IMR-90 (cell line): ENCODE measurements at regions of chr11 and their contacts with region 1.

Region 1: DNA sequence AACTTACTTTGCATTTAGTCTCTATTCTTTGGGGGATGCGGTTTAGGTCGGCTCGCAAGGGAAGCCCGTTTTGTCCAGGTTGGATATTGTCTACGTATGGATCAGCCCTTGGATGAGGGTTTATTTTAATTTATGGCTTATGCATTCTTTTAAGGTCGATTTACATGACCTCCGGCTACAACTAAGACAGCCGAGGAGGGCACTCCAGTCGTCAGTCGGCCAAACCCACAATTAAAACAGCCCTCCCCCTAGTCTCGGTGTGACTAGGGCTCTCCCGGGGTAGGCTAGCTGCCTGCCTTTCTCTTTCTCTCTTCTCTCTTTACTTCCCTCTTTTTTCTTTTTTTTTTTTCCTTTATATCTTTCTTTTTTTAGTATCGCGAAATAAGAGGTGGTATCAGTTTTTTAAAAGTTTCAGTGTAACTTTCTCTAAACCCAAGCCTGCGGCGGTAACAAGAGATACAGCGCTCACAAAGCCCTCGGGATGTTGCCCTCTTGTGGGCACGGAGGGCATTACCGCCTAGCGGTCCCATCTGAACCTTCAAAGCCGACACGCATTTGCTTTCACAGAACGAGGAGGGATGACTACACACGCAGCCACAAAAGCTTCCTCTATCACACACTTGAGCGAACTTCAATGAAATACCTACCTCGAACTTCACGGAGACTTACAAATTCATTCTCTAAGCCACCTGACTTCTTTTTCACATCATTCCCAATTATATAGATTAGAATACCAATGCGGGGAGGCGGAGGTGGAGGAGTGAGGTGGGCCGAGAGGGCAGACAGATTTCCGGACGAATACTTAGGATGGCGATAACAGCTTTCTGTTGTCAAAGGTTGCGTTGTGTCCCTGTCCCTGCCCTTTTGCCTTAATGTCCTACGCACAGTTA is 132.3 kb upstream of the C11orf58 start:
- DNase-seq: peak; percentile 96
- ATAC-seq: peak; percentile 40
- H3K4me3 ChIP-seq: peak overlapping the region; percentile 67
- H3K27ac ChIP-seq: peak overlapping the region; percentile 93
- H3K4me1 ChIP-seq: peaks cover 10% of the 10 kb centered on the region
- H3K27me3 ChIP-seq: no peaks in the 10 kb centered on the region
- CTCF ChIP-seq: peak; percentile 97
- POLR2A ChIP-seq: peak; percentile 23; the same call in 1 of the 2 replicates
- RAD21 ChIP-seq: peak; percentile 93

Region 2: DNA sequence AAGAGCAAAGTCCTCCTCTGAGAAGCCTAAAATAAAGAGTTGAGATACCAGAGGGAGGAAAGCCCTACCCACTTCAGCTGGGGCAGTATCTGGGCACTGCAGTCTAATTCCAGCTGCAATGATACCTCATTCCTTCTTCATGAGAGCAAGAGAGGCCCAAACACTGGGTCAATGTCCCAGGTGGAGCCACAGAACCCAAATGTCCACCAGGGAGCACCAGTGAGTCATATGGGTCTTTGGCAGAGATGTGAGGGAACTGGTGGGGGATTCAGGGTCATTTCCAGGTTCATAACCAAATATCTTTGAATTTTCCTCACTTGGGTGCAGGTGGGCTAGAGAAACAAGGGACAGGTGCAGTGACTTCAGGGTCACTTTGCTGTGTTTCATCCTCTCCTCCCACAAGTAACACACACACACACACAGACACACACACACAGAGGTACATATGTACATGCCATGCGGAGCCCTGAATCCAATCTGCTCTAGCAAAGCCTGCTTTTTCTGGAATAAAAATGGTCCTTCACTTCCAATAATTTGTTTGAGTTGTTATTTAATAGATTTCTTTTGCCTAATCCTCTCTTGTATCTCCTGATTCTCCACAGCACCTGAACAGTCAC is 835.2 kb before region 1 on chr11:
- CTCF ChIA-PET with region 1: no interaction called
- POLR2A ChIA-PET with region 1: no interaction called
- dilution Hi-C with region 1: no loop called
- in situ Hi-C with region 1: no loop called
- intact Hi-C with region 1: loop called (anchors 2 kb)
- DNase-seq: peak; percentile 52
- ATAC-seq: peak; percentile 56; the same call in 1 of the 2 replicates
- H3K4me3 ChIP-seq: no peak overlapping the region
- H3K27ac ChIP-seq: no peak overlapping the region
- H3K4me1 ChIP-seq: peaks cover 6% of the 10 kb centered on the region; the same call in 1 of the 2 replicates
- H3K27me3 ChIP-seq: no peaks in the 10 kb centered on the region; the same call in 1 of the 2 replicates
- CTCF ChIP-seq: peak; percentile 65
- POLR2A ChIP-seq: no peak
- RAD21 ChIP-seq: peak; percentile 79

Region 3: DNA sequence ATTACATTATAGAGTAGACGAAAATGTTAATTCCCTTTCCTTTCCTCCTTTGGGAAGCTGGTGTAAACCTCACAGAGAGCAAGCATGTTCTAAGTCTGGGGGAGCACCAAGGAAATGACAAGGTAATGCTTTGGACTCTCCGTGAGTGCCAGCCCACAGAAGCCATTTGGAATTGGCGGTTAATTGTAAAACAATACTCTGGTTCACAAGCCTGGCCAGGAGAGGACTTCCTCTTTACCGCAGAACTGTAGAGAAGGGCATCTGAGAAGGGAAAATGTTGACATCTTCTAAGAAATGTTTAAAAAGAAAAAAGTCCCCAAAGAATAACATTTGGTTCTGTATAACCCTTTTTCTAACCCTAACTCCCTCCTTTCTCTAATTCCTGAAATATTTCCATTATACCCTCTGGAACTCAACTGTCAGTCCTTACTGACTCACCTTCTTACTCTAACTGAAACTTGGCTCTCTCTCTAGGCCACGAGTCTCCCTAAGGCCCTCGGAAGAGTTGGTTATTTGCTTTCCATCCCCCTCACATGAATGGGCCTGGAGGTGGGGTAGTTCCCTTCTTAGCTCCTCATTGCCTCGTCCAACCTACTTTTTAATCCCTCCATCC is 629.6 kb before region 1 on chr11:
- CTCF ChIA-PET with region 1: no interaction called
- POLR2A ChIA-PET with region 1: interaction called, 6 read pairs
- dilution Hi-C with region 1: no loop called
- in situ Hi-C with region 1: loop called (anchors 10 kb)
- intact Hi-C with region 1: loop called (anchors 1 kb)
- DNase-seq: peak; percentile 74
- ATAC-seq: peak; percentile 94
- H3K4me3 ChIP-seq: no peak overlapping the region
- H3K27ac ChIP-seq: peak overlapping the region; percentile 88
- H3K4me1 ChIP-seq: peaks cover 12% of the 10 kb centered on the region
- H3K27me3 ChIP-seq: no peaks in the 10 kb centered on the region
- CTCF ChIP-seq: no peak
- POLR2A ChIP-seq: no peak
- RAD21 ChIP-seq: 0 out of 2 replicates have a peak, but pooled peaks have one; percentile 9

Region 4: DNA sequence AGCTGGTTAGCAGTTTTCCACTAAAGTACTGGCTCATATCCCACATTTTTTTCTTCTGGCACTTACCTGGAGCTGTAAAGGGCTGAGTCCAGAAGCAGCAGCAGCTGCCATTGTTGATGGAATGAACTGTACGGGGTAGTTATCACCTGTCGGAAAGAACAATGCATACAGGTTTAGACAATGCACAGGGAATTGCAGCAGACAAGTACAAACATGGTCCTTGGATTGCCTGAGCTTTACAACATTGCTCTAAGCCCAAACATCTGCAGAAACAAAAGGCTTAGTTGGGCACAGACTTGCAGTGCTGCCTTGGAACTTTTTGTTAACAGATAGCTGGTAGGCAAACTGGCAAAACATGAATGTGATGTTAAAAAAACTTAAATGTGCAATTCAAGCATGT is 508.6 kb before region 1 on chr11:
- CTCF ChIA-PET with region 1: interaction called, 3 read pairs
- POLR2A ChIA-PET with region 1: no interaction called
- dilution Hi-C with region 1: no loop called
- in situ Hi-C with region 1: no loop called
- intact Hi-C with region 1: loop called (anchors 10 kb)
- DNase-seq: no peak
- ATAC-seq: no peak
- H3K4me3 ChIP-seq: no peak overlapping the region
- H3K27ac ChIP-seq: no peak overlapping the region
- H3K4me1 ChIP-seq: peaks cover 7% of the 10 kb centered on the region
- H3K27me3 ChIP-seq: no peaks in the 10 kb centered on the region
- CTCF ChIP-seq: no peak
- POLR2A ChIP-seq: no peak
- RAD21 ChIP-seq: no peak

Region 5: DNA sequence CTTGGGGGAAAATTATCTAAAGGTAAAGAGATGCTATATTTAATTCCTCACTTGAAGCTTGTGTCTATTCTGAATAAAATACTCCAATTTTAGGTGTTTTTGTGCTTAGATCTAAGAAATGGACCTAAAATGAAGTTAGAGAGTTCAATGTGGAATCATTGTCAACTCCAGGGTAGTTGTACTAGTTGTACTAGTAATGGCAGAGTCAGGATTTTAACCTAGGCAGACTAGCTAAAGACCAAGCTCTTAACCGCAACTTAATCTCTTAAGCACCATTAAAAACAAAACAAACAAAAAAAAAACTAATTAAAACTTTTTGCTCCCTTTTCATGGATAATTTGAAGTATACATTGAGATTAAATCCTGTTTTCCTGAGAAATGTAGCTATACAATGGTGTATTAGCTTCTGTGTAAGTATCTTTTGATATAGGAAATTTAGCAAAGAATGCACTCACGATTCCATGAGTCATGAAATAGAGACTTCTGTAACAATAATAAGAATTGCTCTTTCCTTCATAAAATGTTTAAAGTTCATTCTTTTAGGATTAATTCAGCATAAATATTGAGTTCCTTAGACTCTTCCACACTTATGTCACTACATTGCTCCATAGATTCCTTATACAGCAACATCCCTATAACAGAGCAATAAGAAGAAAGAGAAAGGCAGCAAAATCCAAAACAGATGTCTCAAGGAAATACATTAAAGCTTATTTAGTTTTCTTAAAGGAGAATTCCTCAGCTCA is 223.3 kb before region 1 on chr11:
- CTCF ChIA-PET with region 1: no interaction called
- POLR2A ChIA-PET with region 1: interaction called, 4 read pairs
- dilution Hi-C with region 1: no loop called
- in situ Hi-C with region 1: no loop called
- intact Hi-C with region 1: loop called (anchors 1 kb)
- DNase-seq: peak; percentile 93
- ATAC-seq: peak; percentile 93
- H3K4me3 ChIP-seq: no peak overlapping the region
- H3K27ac ChIP-seq: peak overlapping the region; percentile 91
- H3K4me1 ChIP-seq: peaks cover 5% of the 10 kb centered on the region
- H3K27me3 ChIP-seq: no peaks in the 10 kb centered on the region
- CTCF ChIP-seq: no peak
- POLR2A ChIP-seq: no peak
- RAD21 ChIP-seq: no peak

Region 6: GRCh38 chr11:17563248-17563647 is 957.1 kb after region 1 on chr11:
- CTCF ChIA-PET with region 1: no interaction called
- POLR2A ChIA-PET with region 1: no interaction called
- dilution Hi-C with region 1: no loop called
- in situ Hi-C with region 1: no loop called
- intact Hi-C with region 1: no loop called
- DNase-seq: no peak
- ATAC-seq: no peak
- H3K4me3 ChIP-seq: no peak overlapping the region
- H3K27ac ChIP-seq: no peak overlapping the region
- H3K4me1 ChIP-seq: no peaks in the 10 kb centered on the region
- H3K27me3 ChIP-seq: no peaks in the 10 kb centered on the region; the same call in 1 of the 2 replicates
- CTCF ChIP-seq: no peak
- POLR2A ChIP-seq: no peak
- RAD21 ChIP-seq: no peak